ENCODE measurements at regions of chr6 and their contacts with region 1.

Region 1: DNA sequence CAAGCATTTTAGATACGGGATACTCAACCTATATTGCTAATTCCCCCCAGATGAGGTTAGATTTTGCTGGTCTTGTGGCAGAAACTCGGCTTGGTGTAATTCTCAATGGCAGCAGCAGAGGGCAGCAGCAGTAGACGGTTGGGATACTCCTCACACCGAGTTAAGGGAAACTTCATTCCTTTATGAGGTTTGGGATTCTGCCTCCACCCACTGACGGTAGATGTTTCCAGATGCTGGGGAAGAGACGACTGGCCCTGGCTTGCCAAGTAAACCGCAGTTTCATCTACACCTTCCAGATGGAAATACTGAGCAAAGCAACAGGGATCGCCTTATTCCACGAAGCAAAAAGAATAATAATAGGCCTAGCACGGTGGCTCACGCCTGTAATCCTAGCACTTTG is 8.2 kb upstream of the TBC1D7 start:
- DNase-seq: peak; percentile 60
- H3K4me3 Mint-ChIP-seq: no peak overlapping the region
- H3K27ac Mint-ChIP-seq: no peak overlapping the region
- H3K4me1 Mint-ChIP-seq: peaks cover 43% of the 10 kb centered on the region
- H3K27me3 Mint-ChIP-seq: peaks cover 9% of the 10 kb centered on the region

Region 2: DNA sequence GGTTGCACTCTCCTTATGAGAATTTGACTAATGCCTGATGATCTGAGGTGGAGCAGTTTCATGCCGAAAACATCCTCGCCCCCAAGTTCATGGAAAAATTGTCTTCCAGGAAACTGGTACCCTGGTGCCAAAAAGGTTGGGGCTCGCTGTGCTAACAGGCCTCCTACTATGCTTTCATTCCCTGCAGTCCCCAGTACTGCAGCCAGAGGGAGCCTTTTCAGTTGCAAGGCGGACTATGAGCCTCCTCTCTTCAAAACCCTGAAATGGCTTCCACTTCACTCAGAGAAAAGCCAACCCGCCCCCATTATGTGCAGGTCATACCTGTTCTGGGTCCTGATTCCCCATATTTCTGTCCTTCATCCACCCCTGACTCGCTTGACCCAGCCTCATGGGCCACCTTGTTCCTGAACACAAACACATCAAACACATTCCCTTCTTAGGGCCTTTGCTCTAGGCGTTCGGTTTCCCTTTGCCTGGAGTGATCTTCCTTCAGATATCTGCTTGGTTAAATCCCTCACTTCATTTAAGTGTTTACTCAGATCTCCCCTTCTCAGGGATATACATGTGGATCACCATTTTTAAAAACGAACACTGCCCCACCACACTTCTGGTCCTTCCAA is 446.3 kb before region 1 on chr6:
- intact Hi-C with region 1: no loop called
- DNase-seq: no peak
- H3K4me3 Mint-ChIP-seq: no peak overlapping the region
- H3K27ac Mint-ChIP-seq: no peak overlapping the region
- H3K4me1 Mint-ChIP-seq: no peaks in the 10 kb centered on the region
- H3K27me3 Mint-ChIP-seq: peaks cover 19% of the 10 kb centered on the region

Region 3: GRCh38 chr6:13165518-13166172 is 170.9 kb before region 1 on chr6:
- intact Hi-C with region 1: no loop called
- DNase-seq: no peak
- H3K4me3 Mint-ChIP-seq: no peak overlapping the region
- H3K27ac Mint-ChIP-seq: no peak overlapping the region
- H3K4me1 Mint-ChIP-seq: peaks cover 5% of the 10 kb centered on the region
- H3K27me3 Mint-ChIP-seq: peaks cover 7% of the 10 kb centered on the region

Region 4: GRCh38 chr6:13375360-13375878 is 38.9 kb after region 1 on chr6:
- intact Hi-C with region 1: loop called (anchors 5 kb)
- DNase-seq: no peak
- H3K4me3 Mint-ChIP-seq: no peak overlapping the region
- H3K27ac Mint-ChIP-seq: peak overlapping the region; percentile 23
- H3K4me1 Mint-ChIP-seq: peaks cover 39% of the 10 kb centered on the region
- H3K27me3 Mint-ChIP-seq: no peaks in the 10 kb centered on the region

Region 5: DNA sequence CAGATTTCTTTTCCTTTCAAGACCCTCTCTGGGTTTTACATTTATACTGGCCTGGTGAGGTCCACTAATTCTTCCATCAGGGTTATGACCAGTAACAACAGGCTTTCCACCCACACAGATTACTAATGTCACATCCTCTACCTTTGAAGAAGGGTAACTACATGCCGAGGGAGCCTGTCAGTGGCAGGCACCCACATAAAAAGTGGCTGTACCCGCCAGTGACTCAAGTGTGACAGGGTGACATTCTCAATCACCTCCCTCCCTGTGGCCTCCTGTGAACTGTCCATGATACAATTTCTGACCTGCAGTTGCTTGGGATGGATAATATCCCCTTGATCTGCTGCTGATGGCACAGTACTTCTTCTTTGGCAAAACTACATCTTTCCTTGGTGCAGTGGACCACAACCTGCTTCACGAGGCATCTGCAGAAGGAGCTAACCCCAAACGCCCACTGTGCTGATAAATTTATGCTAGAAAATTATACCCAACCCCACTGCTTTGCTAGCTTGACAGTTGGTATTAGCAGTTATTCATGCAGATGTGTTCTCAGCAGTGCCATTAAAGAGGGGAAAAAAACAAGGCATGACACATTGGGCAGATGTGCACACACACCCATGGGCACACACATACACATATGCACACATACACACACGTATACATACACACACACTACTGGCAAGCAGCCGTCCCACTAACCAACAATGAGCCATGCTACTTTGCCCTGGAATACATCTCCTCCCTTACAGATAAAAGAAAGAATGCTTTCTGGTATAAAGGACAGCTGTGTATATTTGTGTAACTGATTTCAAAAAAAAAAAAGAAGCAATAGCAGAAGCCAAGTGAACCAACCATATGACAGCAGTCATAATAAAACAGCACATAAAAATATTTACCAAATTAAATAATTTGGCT is 130.0 kb after region 1 on chr6:
- intact Hi-C with region 1: loop called (anchors 5 kb)
- DNase-seq: no peak
- H3K4me3 Mint-ChIP-seq: no peak overlapping the region
- H3K27ac Mint-ChIP-seq: peak overlapping the region; percentile 85
- H3K4me1 Mint-ChIP-seq: peaks cover 46% of the 10 kb centered on the region
- H3K27me3 Mint-ChIP-seq: no peaks in the 10 kb centered on the region

Region 6: DNA sequence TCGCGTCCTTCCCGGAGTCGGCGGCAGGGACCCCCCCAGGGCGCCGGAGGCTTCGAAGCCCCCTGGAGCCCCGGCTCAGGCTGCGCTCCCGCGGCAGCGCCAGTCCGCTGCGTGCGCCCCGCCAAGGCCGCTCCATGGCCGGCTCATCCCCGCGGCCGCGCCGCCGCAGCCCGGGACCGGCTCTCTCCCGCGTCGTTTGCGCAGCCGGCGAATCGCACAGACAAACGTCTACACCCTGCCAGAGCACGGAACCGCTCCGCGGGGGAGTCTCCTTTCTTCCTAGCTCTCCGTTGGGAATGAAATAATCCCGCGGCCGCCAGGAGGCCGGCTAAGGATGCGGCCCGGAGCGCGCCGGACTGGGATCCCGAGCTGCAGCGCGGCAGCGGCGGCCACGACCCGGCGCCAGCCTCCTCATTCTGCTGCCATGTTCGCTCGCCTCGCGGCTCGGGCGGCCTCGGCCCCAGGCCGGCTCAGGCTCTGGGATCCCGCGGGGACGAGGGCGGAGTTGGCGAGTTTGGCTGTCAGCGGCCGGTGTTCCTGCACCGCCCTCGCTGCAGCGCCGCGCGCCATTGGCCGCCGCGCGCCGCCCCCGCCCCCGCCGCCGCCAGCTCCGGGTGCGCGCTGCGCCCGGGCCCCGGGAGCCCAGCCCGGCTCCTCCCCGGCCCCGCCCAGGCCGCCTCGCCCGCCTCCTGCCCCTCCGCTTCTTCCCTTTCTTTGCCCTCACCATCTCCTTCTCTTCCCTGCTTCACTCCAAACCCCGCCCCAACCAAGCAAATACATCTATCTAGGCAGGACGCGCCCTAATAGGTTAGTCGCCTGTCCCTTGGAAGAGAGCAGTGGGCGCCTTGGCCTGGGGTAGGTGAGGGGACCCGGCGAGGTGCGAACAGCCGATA is 150.8 kb after region 1 on chr6 and contains the start of gene GFOD1:
- intact Hi-C with region 1: loop called (anchors 1 kb)
- DNase-seq: peak; percentile 80
- H3K4me3 Mint-ChIP-seq: peak within 1 kb of the TSS; percentile 89
- H3K27ac Mint-ChIP-seq: peak within 1 kb of the TSS; percentile 72
- H3K4me1 Mint-ChIP-seq: peaks cover 39% of the 10 kb centered on the region
- H3K27me3 Mint-ChIP-seq: peaks cover 10% of the 10 kb centered on the region
- total RNA-seq, gene GFOD1: 12.4 and 13.6 TPM in 2 replicates

Region 7: DNA sequence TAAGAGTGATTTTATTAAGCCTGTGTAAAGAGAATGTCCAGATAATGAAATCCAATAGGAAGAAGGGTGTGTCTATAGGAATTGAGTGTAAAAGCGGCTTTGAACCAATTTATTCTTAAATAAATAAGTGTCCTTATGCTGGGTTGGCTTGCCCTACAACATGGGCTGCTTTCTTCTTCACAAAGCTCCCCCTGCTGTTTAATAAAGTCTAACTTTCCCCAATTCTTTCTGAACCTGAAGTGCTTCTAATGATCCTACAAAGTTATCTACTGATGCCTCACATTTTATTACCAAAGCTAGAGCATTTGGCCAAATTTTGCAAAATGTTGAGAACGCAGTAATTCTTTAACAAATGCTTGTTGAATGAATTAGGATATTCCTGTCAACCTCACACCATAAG is 201.5 kb after region 1 on chr6:
- intact Hi-C with region 1: loop called (anchors 1 kb)
- DNase-seq: no peak
- H3K4me3 Mint-ChIP-seq: no peak overlapping the region
- H3K27ac Mint-ChIP-seq: no peak overlapping the region
- H3K4me1 Mint-ChIP-seq: no peaks in the 10 kb centered on the region
- H3K27me3 Mint-ChIP-seq: peaks cover 3% of the 10 kb centered on the region

Region 8: DNA sequence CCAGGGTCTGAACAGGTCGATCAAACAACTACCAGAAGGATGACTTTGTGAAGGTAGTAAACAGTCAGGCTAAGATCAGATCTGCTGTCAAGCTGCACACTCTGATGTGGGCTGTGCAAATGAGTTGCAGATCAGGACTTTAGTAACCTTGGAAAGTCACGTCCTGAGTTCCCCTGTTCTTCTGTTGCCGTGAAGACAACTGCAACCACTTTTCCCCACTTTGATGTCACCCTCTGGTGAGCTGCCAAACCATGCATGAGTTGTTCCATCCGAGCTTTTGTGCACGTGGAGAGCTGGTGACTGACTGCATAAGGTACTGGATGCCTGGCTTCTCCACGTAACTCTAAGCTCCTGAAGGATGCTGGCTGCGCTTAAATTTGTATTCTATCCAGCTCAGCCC is 892.0 kb after region 1 on chr6:
- intact Hi-C with region 1: no loop called
- DNase-seq: no peak
- H3K4me3 Mint-ChIP-seq: no peak overlapping the region
- H3K27ac Mint-ChIP-seq: no peak overlapping the region
- H3K4me1 Mint-ChIP-seq: peaks cover 16% of the 10 kb centered on the region
- H3K27me3 Mint-ChIP-seq: peaks cover 1% of the 10 kb centered on the region

Measured in activated T-helper 1 cell treated with anti-CD3 and anti-CD28 coated beads, Interleukin-12 subunit alpha, Interleukin-12 subunit beta, Interleukin-2, Interleukin-4 antibody, amounts not matched to agents 30 ng/mL and 10 ng/mL and 1 ng/mL, durations not matched to agents 14 hours and 24 hours and 36 hours (primary cell).